ENCODE measurements at regions of chr1 and their contacts with region 1.

Region 1: GRCh38 chr1:110963691-110964399 is at the start of gene LRIF1:
- DNase-seq: peak; percentile 96 to 100 (median 100)
- ATAC-seq: peak; percentile 98
- H3K4me3 ChIP-seq: peak within 1 kb of the TSS; percentile 90
- H3K4me3 Mint-ChIP-seq: peak within 1 kb of the TSS; percentile 81 to 98 (median 93)
- H3K27ac ChIP-seq: peak within 1 kb of the TSS; percentile 89
- H3K27ac Mint-ChIP-seq: peak within 1 kb of the TSS; percentile 89 to 99 (median 97)
- H3K4me1 ChIP-seq: peaks cover 25% of the 10 kb centered on the region in 2 donors
- H3K4me1 Mint-ChIP-seq: peaks cover 29 to 50% (median 35%) of the 10 kb centered on the region in 7 donors
- H3K27me3 ChIP-seq: peaks cover 0 to under 1% of the 10 kb centered on the region in 2 donors
- H3K27me3 Mint-ChIP-seq: peaks cover 12 to 19% (median 15%) of the 10 kb centered on the region in 5 donors
- total RNA-seq, gene LRIF1: 7.9 to 25.8 (median 17.3) TPM

Region 2: DNA sequence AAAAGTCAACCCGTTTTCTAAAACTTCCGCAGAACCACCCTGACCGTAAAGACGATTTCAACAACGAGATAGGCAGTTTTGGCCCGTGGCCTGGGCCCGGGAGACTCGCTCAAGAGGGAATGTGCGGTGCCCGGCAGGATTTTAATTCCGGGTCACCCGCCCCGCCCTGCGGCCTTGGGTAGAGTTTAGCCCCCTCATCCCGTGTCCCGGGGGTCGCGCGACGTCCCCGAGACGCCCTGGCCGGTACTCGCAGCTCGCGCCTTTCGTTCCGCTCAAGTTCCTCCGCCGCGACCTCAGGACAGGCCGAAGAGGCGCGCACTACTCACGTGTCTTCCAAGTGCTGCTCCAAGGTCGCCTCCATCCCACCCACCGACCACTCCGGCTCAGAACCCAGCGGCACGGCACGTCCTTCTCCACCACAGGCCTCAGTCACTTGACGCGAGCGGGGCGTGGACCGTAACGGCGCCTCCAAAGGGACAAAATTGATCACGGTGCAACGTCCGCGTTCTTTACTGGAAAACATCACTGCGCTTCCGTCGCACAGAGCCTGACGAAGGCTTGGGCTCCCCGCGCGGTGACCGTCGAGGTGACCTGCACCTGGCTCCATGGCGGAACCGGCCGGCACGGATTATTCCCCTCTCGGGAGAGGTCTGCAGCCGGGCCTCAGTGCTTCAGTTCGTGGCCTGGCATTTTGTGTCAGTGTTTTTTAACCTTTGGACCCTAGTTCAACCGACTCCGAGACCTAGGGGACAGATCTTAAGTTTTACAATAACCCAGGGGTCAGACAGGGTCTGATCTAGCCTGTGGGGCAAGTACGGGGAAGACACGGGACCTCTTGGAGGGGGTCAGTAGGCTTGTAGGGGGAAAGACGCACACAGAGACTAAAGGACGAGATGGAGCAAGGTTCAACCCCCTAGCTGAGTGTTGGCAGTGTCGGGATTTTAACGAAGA is 556.3 kb before region 1 on chr1 and contains the start of gene LAMTOR5:
- CTCF ChIA-PET with region 1: no interaction called
- POLR2A ChIA-PET with region 1: no interaction called
- intact Hi-C with region 1: loop called in 1 of 2 experiments (anchors 5 kb)
- DNase-seq: peak; percentile 77 to 91 (median 89)
- ATAC-seq: peak; percentile 98
- H3K4me3 ChIP-seq: peak within 1 kb of the TSS; percentile 95
- H3K4me3 Mint-ChIP-seq: peak within 1 kb of the TSS; percentile 88 to 100 (median 99)
- H3K27ac ChIP-seq: peak within 1 kb of the TSS; percentile 92
- H3K27ac Mint-ChIP-seq: peak within 1 kb of the TSS; percentile 96 to 100 (median 99)
- H3K4me1 ChIP-seq: peaks cover 19% of the 10 kb centered on the region in 2 donors
- H3K4me1 Mint-ChIP-seq: peaks cover 9 to 39% (median 27%) of the 10 kb centered on the region in 7 donors
- H3K27me3 ChIP-seq: no peaks in the 10 kb centered on the region
- H3K27me3 Mint-ChIP-seq: no peaks in the 10 kb centered on the region
- total RNA-seq, gene LAMTOR5: 63.3 to 146 (median 69.4) TPM

Region 3: GRCh38 chr1:110780600-110781484 is 183.0 kb before region 1 on chr1:
- CTCF ChIA-PET with region 1: interaction called, 6 read pairs
- POLR2A ChIA-PET with region 1: interaction called, 3 read pairs
- intact Hi-C with region 1: loop called (anchors 1 to 2 kb)
- DNase-seq: peak; percentile 48 to 83 (median 74)
- ATAC-seq: peak; percentile 88
- H3K4me3 ChIP-seq: no peak overlapping the region
- H3K4me3 Mint-ChIP-seq: peak overlapping the region in 5 of 10 donors; percentile 29 to 61 (median 42)
- H3K27ac ChIP-seq: no peak overlapping the region
- H3K27ac Mint-ChIP-seq: peak overlapping the region in 5 of 9 donors; percentile 2 to 82 (median 34)
- H3K4me1 ChIP-seq: peaks cover 31 to 40% of the 10 kb centered on the region in 2 donors
- H3K4me1 Mint-ChIP-seq: peaks cover 18 to 54% (median 45%) of the 10 kb centered on the region in 7 donors
- H3K27me3 ChIP-seq: no peaks in the 10 kb centered on the region
- H3K27me3 Mint-ChIP-seq: peaks cover 0 to 28% (median 0%) of the 10 kb centered on the region in 5 donors

Region 4: GRCh38 chr1:110829955-110830553 is 133.8 kb before region 1 on chr1:
- CTCF ChIA-PET with region 1: interaction called, 4 read pairs
- POLR2A ChIA-PET with region 1: no interaction called
- intact Hi-C with region 1: loop called in 1 of 2 experiments (anchors 2 kb)
- DNase-seq: peak in 7 of 9 donors; percentile 20 to 61 (median 54)
- ATAC-seq: peak; percentile 93
- H3K4me3 ChIP-seq: no peak overlapping the region
- H3K4me3 Mint-ChIP-seq: no peak overlapping the region
- H3K27ac ChIP-seq: no peak overlapping the region
- H3K27ac Mint-ChIP-seq: peak overlapping the region in 1 of 9 donors; percentile 14
- H3K4me1 ChIP-seq: no peaks in the 10 kb centered on the region
- H3K4me1 Mint-ChIP-seq: peaks cover 6 to 33% (median 13%) of the 10 kb centered on the region in 7 donors
- H3K27me3 ChIP-seq: no peaks in the 10 kb centered on the region
- H3K27me3 Mint-ChIP-seq: peaks cover 0 to 49% (median 2%) of the 10 kb centered on the region in 5 donors

Region 5: GRCh38 chr1:110896090-110896489 is 67.8 kb before region 1 on chr1:
- CTCF ChIA-PET with region 1: no interaction called
- POLR2A ChIA-PET with region 1: interaction called, 3 read pairs
- intact Hi-C with region 1: loop called in 1 of 2 experiments (anchors 5 kb)
- DNase-seq: peak in 6 of 9 donors; percentile 43 to 60 (median 54)
- ATAC-seq: peak; percentile 58
- H3K4me3 ChIP-seq: no peak overlapping the region
- H3K4me3 Mint-ChIP-seq: peak overlapping the region; percentile 38 to 95 (median 66)
- H3K27ac ChIP-seq: peak overlapping the region; percentile 52
- H3K27ac Mint-ChIP-seq: peak overlapping the region; percentile 88 to 98 (median 93)
- H3K4me1 ChIP-seq: peaks cover 62 to 76% of the 10 kb centered on the region in 2 donors
- H3K4me1 Mint-ChIP-seq: peaks cover 59 to 89% (median 84%) of the 10 kb centered on the region in 7 donors
- H3K27me3 ChIP-seq: no peaks in the 10 kb centered on the region
- H3K27me3 Mint-ChIP-seq: no peaks in the 10 kb centered on the region

Region 6: GRCh38 chr1:111139956-111140679 is 176.3 kb after region 1 on chr1 and contains the starts of genes CEPT1 and DRAM2:
- CTCF ChIA-PET with region 1: no interaction called
- POLR2A ChIA-PET with region 1: interaction called, 4 read pairs
- intact Hi-C with region 1: loop called (anchors 1 kb)
- DNase-seq: peak; percentile 77 to 93 (median 89)
- ATAC-seq: peak; percentile 95
- H3K4me3 ChIP-seq: peak within 1 kb of the TSS; percentile 91
- H3K4me3 Mint-ChIP-seq: peak within 1 kb of the TSS; percentile 87 to 100 (median 98)
- H3K27ac ChIP-seq: peak within 1 kb of the TSS; percentile 93
- H3K27ac Mint-ChIP-seq: peak within 1 kb of the TSS; percentile 91 to 100 (median 97)
- H3K4me1 ChIP-seq: peaks cover 18 to 22% of the 10 kb centered on the region in 2 donors
- H3K4me1 Mint-ChIP-seq: peaks cover 40 to 75% (median 57%) of the 10 kb centered on the region in 7 donors
- H3K27me3 ChIP-seq: no peaks in the 10 kb centered on the region
- H3K27me3 Mint-ChIP-seq: no peaks in the 10 kb centered on the region
- total RNA-seq, gene CEPT1: 39.1 to 57.5 (median 40.2) TPM
- total RNA-seq, gene DRAM2: 26.9 to 51.6 (median 43.5) TPM

Region 7: GRCh38 chr1:111448918-111449702 is 485.3 kb after region 1 on chr1 and contains the starts of genes ATP5PB and WDR77:
- CTCF ChIA-PET with region 1: no interaction called
- POLR2A ChIA-PET with region 1: no interaction called
- intact Hi-C with region 1: loop called (anchors 1 kb)
- DNase-seq: peak; percentile 66 to 97 (median 94)
- ATAC-seq: peak; percentile 98
- H3K4me3 ChIP-seq: peak within 1 kb of the TSS; percentile 89
- H3K4me3 Mint-ChIP-seq: peak within 1 kb of the TSS; percentile 97 to 100 (median 100)
- H3K27ac ChIP-seq: peak within 1 kb of the TSS; percentile 98
- H3K27ac Mint-ChIP-seq: peak within 1 kb of the TSS; percentile 95 to 100 (median 99)
- H3K4me1 ChIP-seq: peaks cover 51 to 55% of the 10 kb centered on the region in 2 donors
- H3K4me1 Mint-ChIP-seq: peaks cover 43 to 92% (median 78%) of the 10 kb centered on the region in 7 donors
- H3K27me3 ChIP-seq: no peaks in the 10 kb centered on the region
- H3K27me3 Mint-ChIP-seq: no peaks in the 10 kb centered on the region
- total RNA-seq, gene ATP5PB: 64.9 to 298 (median 98.7) TPM
- total RNA-seq, gene WDR77: 20.7 to 39.9 (median 29.5) TPM